ENCODE measurements at regions of chr15 and their contacts with region 1.

Region 1: GRCh38 chr15:74781431-74782258 is at the start of gene CSK:
- DNase-seq: peak; percentile 95
- H3K4me3 Mint-ChIP-seq: peak within 1 kb of the TSS; percentile 98
- H3K27ac Mint-ChIP-seq: peak within 1 kb of the TSS; percentile 96
- H3K4me1 Mint-ChIP-seq: peaks cover 66% of the 10 kb centered on the region
- H3K27me3 Mint-ChIP-seq: no peaks in the 10 kb centered on the region
- total RNA-seq, gene CSK: 332 and 340 TPM in 2 replicates

Region 2: GRCh38 chr15:74460871-74461846 is 320.5 kb before region 1 on chr15 and contains the start of gene UBL7:
- intact Hi-C with region 1: loop called (anchors 5 kb)
- DNase-seq: peak; percentile 99
- H3K4me3 Mint-ChIP-seq: peak within 1 kb of the TSS; percentile 94
- H3K27ac Mint-ChIP-seq: peak within 1 kb of the TSS; percentile 94
- H3K4me1 Mint-ChIP-seq: peaks cover 42% of the 10 kb centered on the region
- H3K27me3 Mint-ChIP-seq: no peaks in the 10 kb centered on the region
- total RNA-seq, gene UBL7: 53.5 and 62.1 TPM in 2 replicates

Region 3: GRCh38 chr15:74615508-74616365 is 165.9 kb before region 1 on chr15 and contains the start of gene CLK3:
- intact Hi-C with region 1: loop called (anchors 5 kb)
- DNase-seq: peak; percentile 99
- H3K4me3 Mint-ChIP-seq: peak within 1 kb of the TSS; percentile 95
- H3K27ac Mint-ChIP-seq: peak within 1 kb of the TSS; percentile 97
- H3K4me1 Mint-ChIP-seq: peaks cover 41% of the 10 kb centered on the region
- H3K27me3 Mint-ChIP-seq: no peaks in the 10 kb centered on the region
- total RNA-seq, gene CLK3: 112 and 113 TPM in 2 replicates

Region 4: GRCh38 chr15:74799856-74800547 is 18.4 kb after region 1 on chr15:
- intact Hi-C with region 1: loop called (anchors 1 kb)
- DNase-seq: peak; percentile 96
- H3K4me3 Mint-ChIP-seq: peak overlapping the region; percentile 58
- H3K27ac Mint-ChIP-seq: peak overlapping the region; percentile 89
- H3K4me1 Mint-ChIP-seq: peaks cover 37% of the 10 kb centered on the region
- H3K27me3 Mint-ChIP-seq: no peaks in the 10 kb centered on the region

Region 5: GRCh38 chr15:74812533-74812932 is 30.9 kb after region 1 on chr15 and contains the start of gene LMAN1L:
- intact Hi-C with region 1: no loop called
- DNase-seq: no peak
- H3K4me3 Mint-ChIP-seq: no peak within 1 kb of the TSS
- H3K27ac Mint-ChIP-seq: no peak within 1 kb of the TSS
- H3K4me1 Mint-ChIP-seq: peaks cover 4% of the 10 kb centered on the region
- H3K27me3 Mint-ChIP-seq: peaks cover 5% of the 10 kb centered on the region
- total RNA-seq, gene LMAN1L: 0.33 and 0.36 TPM in 2 replicates

Region 6: DNA sequence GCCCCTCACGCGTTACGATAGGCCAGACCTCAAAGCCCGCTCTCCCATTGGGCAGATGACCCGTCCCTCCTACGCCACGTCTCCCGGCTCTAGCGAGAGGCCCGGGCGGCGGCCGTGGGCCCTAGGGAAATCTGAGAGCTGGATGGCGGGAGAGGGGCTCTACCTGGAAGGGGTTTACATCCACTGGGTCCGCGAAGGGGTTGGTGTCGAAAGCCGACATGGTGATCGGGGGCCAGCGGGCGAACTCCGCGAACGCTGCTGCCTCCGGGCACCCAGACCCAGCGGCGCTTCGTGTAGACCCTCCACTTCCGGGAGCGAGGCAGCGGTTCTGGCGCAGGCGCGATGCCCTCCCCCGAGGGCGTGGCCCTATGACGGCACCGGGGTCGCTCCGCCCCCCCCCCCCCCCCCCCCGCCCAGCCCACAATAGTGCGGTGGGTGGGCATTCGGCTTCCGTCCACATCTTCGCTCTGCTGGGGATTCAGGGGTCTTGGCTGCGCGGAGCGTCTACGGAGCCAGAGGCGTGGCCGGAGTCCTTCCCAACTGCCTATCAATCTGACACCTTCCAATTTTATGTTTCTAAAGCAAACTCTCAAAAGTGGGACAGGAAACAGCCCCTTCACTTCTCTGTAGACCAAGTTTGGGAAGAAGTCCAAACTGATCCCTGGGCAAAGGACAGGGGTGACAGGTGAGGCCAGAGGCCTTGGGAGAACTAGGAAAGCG is 91.6 kb after region 1 on chr15 and contains the start of gene SCAMP2:
- intact Hi-C with region 1: loop called (anchors 1 kb)
- DNase-seq: peak; percentile 96
- H3K4me3 Mint-ChIP-seq: peak within 1 kb of the TSS; percentile 99
- H3K27ac Mint-ChIP-seq: peak within 1 kb of the TSS; percentile 93
- H3K4me1 Mint-ChIP-seq: peaks cover 44% of the 10 kb centered on the region
- H3K27me3 Mint-ChIP-seq: no peaks in the 10 kb centered on the region
- total RNA-seq, gene SCAMP2: 89.4 and 94.8 TPM in 2 replicates